Mammary epithelial cell (primary cell): ENCODE measurements at regions of chr13 and their contacts with region 1.

Region 1: DNA sequence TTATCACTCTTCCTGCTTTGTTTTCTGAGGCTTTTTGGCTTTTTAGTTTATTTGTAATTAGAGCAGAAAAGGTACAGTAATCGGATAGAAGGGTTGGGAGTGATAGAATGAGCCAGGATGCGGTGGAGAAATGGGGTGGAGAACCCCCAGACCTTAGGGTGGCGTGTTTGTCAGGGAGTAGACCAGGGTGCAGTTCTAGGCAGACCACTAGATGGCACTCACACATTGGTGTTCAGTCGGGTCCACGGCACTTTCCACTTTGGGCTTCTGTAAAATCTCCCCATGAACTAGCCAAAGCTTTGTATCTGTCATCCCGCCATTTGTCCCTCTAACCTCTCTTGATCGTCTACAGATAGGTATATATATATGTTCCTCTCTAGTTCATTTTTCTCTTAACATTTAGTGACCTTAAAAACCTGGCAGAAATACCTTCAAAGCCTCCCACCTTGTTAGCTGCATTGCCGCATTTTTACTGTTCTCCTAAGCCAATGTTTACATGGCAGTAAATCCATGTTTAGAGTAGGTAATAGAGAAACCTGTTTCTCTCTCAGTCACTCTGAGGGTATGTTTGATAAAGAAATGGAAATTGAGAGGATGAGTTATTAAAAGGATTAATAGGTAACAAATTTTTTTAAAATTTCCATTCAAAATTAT is 154.9 kb downstream of the TM9SF2 start:
- DNase-seq: peak; percentile 43
- H3K4me3 ChIP-seq: no peak overlapping the region
- H3K27ac ChIP-seq: no peak overlapping the region
- H3K4me1 ChIP-seq: peaks cover 18% of the 10 kb centered on the region
- H3K27me3 ChIP-seq: no peaks in the 10 kb centered on the region
- CTCF ChIP-seq: peak; percentile 90 to 91

Region 2: DNA sequence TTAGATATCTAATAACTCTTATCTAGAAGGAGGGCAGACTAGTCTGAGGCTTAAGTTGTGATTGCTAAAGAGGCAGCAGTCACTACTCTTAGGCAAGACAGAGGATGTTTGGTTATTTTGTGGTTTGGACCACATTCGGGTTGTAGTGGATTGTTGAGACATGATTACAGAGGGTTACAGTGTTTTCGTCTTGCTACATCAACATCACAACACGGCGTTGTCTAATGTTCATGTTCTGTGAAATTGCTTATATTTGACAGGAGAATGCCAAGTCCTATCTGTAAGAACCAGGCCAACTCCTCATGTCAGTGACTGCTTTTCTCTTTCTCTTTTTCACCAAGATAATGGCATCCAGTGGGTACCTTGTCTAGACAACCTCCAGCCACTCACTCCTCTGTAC is 171.7 kb before region 1 on chr13:
- CTCF ChIA-PET with region 1: interaction called, 12 read pairs
- dilution Hi-C with region 1: no loop called
- in situ Hi-C with region 1: no loop called
- intact Hi-C with region 1: no loop called
- DNase-seq: peak; percentile 93
- H3K4me3 ChIP-seq: no peak overlapping the region
- H3K27ac ChIP-seq: peak overlapping the region; percentile 25
- H3K4me1 ChIP-seq: peaks cover 25% of the 10 kb centered on the region
- H3K27me3 ChIP-seq: no peaks in the 10 kb centered on the region
- CTCF ChIP-seq: no peak

Region 3: GRCh38 chr13:99686157-99686572 is 29.9 kb after region 1 on chr13:
- CTCF ChIA-PET with region 1: no interaction called
- dilution Hi-C with region 1: loop called (anchors 5 kb)
- in situ Hi-C with region 1: no loop called
- intact Hi-C with region 1: no loop called
- DNase-seq: no peak
- H3K4me3 ChIP-seq: no peak overlapping the region
- H3K27ac ChIP-seq: no peak overlapping the region
- H3K4me1 ChIP-seq: no peaks in the 10 kb centered on the region
- H3K27me3 ChIP-seq: no peaks in the 10 kb centered on the region
- CTCF ChIP-seq: no peak

Region 4: GRCh38 chr13:99980201-99980823 is 324.1 kb after region 1 on chr13:
- CTCF ChIA-PET with region 1: no interaction called
- dilution Hi-C with region 1: no loop called
- in situ Hi-C with region 1: no loop called
- intact Hi-C with region 1: loop called (anchors 5 kb)
- DNase-seq: peak; percentile 76
- H3K4me3 ChIP-seq: peak overlapping the region; percentile 40 to 61 (median 58)
- H3K27ac ChIP-seq: no peak overlapping the region
- H3K4me1 ChIP-seq: peaks cover 20% of the 10 kb centered on the region
- H3K27me3 ChIP-seq: peaks cover 58% of the 10 kb centered on the region
- CTCF ChIP-seq: no peak

Region 5: GRCh38 chr13:100088644-100089464 is 432.6 kb after region 1 on chr13 and contains the start of gene PCCA:
- CTCF ChIA-PET with region 1: no interaction called
- dilution Hi-C with region 1: no loop called
- in situ Hi-C with region 1: no loop called
- intact Hi-C with region 1: loop called (anchors 5 kb)
- DNase-seq: peak; percentile 91
- H3K4me3 ChIP-seq: peak within 1 kb of the TSS; percentile 65 to 94 (median 84)
- H3K27ac ChIP-seq: peak within 1 kb of the TSS; percentile 50
- H3K4me1 ChIP-seq: peaks cover 20% of the 10 kb centered on the region
- H3K27me3 ChIP-seq: no peaks in the 10 kb centered on the region
- CTCF ChIP-seq: no peak
- total RNA-seq, gene PCCA: 16.9 to 31.5 TPM

Region 6: GRCh38 chr13:100514788-100515409 is 858.7 kb after region 1 on chr13:
- CTCF ChIA-PET with region 1: interaction called, 3 read pairs
- dilution Hi-C with region 1: no loop called
- in situ Hi-C with region 1: loop called in 1 of 2 experiments (anchors 25 kb)
- intact Hi-C with region 1: loop called (anchors 1 kb)
- DNase-seq: peak; percentile 48
- H3K4me3 ChIP-seq: no peak overlapping the region
- H3K27ac ChIP-seq: no peak overlapping the region
- H3K4me1 ChIP-seq: no peaks in the 10 kb centered on the region
- H3K27me3 ChIP-seq: no peaks in the 10 kb centered on the region
- CTCF ChIP-seq: peak; percentile 94 to 97